Activated CD4-positive, alpha-beta T cell treated with anti-CD3 and anti-CD28 coated beads, Interleukin-2, amount 10 ng/mL, durations not matched to agents 24 days and 14 days (primary cell): ENCODE measurements at regions of chr1 and their contacts with region 1.

Region 1: GRCh38 chr1:150067184-150068036 is at the start of gene VPS45:
- DNase-seq: peak; percentile 95
- H3K4me3 Mint-ChIP-seq: peak within 1 kb of the TSS; percentile 96
- H3K27ac Mint-ChIP-seq: peak within 1 kb of the TSS; percentile 98
- H3K4me1 Mint-ChIP-seq: peaks cover 24% of the 10 kb centered on the region
- H3K27me3 Mint-ChIP-seq: peaks cover 1% of the 10 kb centered on the region
- total RNA-seq, gene VPS45: 20.8 and 21.0 TPM in 2 replicates

Region 2: DNA sequence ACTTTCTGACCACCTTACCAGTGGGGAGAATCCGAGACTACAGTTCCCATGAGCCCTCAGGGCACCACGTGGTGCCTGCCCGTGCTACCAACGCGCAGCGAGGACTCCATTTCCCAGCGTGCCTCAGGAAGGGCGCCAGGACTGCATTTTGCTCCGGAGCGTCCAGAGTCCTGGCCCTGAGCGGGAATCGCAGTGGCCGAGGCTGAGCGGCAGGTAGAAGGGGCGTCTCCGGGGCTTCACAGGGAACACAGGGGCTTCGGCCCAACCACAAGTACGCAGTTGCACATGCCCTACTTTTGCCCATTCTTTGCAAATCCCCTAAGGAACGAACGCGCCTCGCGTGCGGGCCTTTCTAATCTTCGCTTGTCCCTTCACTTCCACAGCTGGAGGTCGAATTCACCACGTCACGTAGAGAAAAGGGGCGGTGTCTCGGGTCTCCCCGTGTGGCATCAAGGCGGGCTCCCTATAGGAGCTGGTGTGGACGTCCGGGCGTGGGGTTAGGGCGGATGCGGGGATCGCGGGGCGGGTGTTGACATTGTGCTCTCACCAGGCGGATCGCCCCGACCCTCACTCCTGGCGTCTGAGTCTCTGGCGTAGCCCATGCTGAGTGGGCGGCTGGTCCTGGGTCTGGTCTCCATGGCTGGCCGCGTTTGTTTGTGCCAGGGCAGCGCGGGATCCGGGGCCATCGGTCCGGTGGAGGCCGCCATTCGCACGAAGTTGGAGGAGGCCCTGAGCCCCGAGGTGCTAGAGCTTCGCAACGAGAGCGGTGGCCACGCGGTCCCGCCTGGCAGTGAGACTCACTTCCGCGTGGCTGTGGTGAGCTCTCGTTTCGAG is 167.7 kb before region 1 on chr1 and contains the start of gene BOLA1:
- intact Hi-C with region 1: loop called (anchors 2 kb)
- DNase-seq: peak; percentile 95
- H3K4me3 Mint-ChIP-seq: peak within 1 kb of the TSS; percentile 87
- H3K27ac Mint-ChIP-seq: peak within 1 kb of the TSS; percentile 94
- H3K4me1 Mint-ChIP-seq: peaks cover 21% of the 10 kb centered on the region
- H3K27me3 Mint-ChIP-seq: no peaks in the 10 kb centered on the region
- total RNA-seq, gene BOLA1: 25.8 and 26.6 TPM in 2 replicates

Region 3: GRCh38 chr1:149997585-149998262 is 69.7 kb before region 1 on chr1:
- intact Hi-C with region 1: loop called (anchors 5 kb)
- DNase-seq: no peak
- H3K4me3 Mint-ChIP-seq: peak overlapping the region; percentile 38
- H3K27ac Mint-ChIP-seq: peak overlapping the region; percentile 75
- H3K4me1 Mint-ChIP-seq: peaks cover 50% of the 10 kb centered on the region
- H3K27me3 Mint-ChIP-seq: no peaks in the 10 kb centered on the region

Region 4: GRCh38 chr1:150009665-150010392 is 57.6 kb before region 1 on chr1:
- intact Hi-C with region 1: loop called (anchors 1 kb)
- DNase-seq: peak; percentile 81
- H3K4me3 Mint-ChIP-seq: peak overlapping the region; percentile 95
- H3K27ac Mint-ChIP-seq: peak overlapping the region; percentile 98
- H3K4me1 Mint-ChIP-seq: peaks cover 39% of the 10 kb centered on the region
- H3K27me3 Mint-ChIP-seq: peaks cover 1% of the 10 kb centered on the region

Region 5: GRCh38 chr1:150149271-150150132 is 82.1 kb after region 1 on chr1 and contains the start of gene PLEKHO1:
- intact Hi-C with region 1: loop called (anchors 2 kb)
- DNase-seq: peak; percentile 92
- H3K4me3 Mint-ChIP-seq: peak within 1 kb of the TSS; percentile 91
- H3K27ac Mint-ChIP-seq: peak within 1 kb of the TSS; percentile 87
- H3K4me1 Mint-ChIP-seq: peaks cover 55% of the 10 kb centered on the region
- H3K27me3 Mint-ChIP-seq: peaks cover 24% of the 10 kb centered on the region
- total RNA-seq, gene PLEKHO1: 25.2 and 26.4 TPM in 2 replicates

Region 6: GRCh38 chr1:150186789-150187559 is 119.6 kb after region 1 on chr1:
- intact Hi-C with region 1: loop called (anchors 5 kb)
- DNase-seq: no peak
- H3K4me3 Mint-ChIP-seq: peak overlapping the region; percentile 31
- H3K27ac Mint-ChIP-seq: no peak overlapping the region
- H3K4me1 Mint-ChIP-seq: peaks cover 10% of the 10 kb centered on the region
- H3K27me3 Mint-ChIP-seq: no peaks in the 10 kb centered on the region

Region 7: GRCh38 chr1:150207281-150207971 is 140.0 kb after region 1 on chr1:
- intact Hi-C with region 1: no loop called
- DNase-seq: no peak
- H3K4me3 Mint-ChIP-seq: no peak overlapping the region
- H3K27ac Mint-ChIP-seq: no peak overlapping the region
- H3K4me1 Mint-ChIP-seq: no peaks in the 10 kb centered on the region
- H3K27me3 Mint-ChIP-seq: peaks cover 21% of the 10 kb centered on the region